Astrocyte of the cerebellum (primary cell): ENCODE measurements at regions of chr5 and their contacts with region 1.

Region 1: DNA sequence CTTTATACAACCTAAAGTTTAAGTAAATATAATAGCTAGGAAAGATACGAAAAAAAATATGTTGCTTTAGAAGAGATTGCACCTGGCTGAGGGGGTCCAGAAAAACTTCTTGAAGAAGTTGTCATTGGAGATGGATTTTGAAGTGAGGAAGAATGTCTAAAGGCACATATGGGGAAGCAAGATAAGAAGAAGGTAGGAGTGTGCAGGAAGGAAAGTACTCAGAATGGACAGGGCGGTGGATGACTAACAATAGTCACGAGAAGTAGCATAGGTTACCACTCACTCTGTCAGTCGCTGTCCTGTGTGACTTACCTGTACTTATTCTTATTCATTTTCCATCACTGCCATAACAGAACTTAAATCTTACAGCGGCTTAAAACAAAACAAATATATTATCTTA is 251.6 kb downstream of the GRIA1 start:
- DNase-seq: no peak
- H3K4me3 ChIP-seq: no peak overlapping the region
- CTCF ChIP-seq: no peak

Region 2: GRCh38 chr5:153672347-153673090 is 69.5 kb before region 1 on chr5:
- in situ Hi-C with region 1: no loop called
- DNase-seq: no peak
- H3K4me3 ChIP-seq: no peak overlapping the region
- CTCF ChIP-seq: no peak

Region 3: DNA sequence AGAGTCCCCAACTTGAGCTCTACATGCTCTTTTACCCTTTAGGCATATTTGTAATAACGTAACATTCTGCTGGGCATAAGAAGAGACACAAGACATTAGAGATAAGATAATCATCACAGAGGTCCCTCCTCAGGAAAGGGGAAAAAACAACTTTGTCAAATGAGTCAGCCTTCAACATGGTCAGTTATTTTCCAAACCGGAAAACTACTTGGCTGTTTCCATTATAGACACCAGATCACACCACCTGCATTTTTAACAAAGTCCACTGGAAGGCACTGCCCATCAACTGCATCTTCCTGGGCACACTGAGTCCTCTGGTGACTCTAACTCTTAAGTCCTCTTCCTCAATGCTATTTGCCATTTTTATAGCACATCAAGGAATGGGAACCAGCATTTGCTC is 74.8 kb after region 1 on chr5:
- in situ Hi-C with region 1: loop called (anchors 5 kb)
- DNase-seq: no peak
- H3K4me3 ChIP-seq: no peak overlapping the region
- CTCF ChIP-seq: no peak